ENCODE measurements at regions of chr15 and their contacts with region 1.

Region 1: GRCh38 chr15:43824302-43825246 is at the start of gene MFAP1:
- DNase-seq: peak; percentile 83 to 97
- H3K4me3 ChIP-seq: peak within 1 kb of the TSS; percentile 57 to 83
- H3K27ac ChIP-seq: peak within 1 kb of the TSS; percentile 91 to 92
- H3K4me1 ChIP-seq: peaks cover 9 to 18% of the 10 kb centered on the region in 2 donors
- H3K27me3 ChIP-seq: no peaks in the 10 kb centered on the region
- CTCF ChIP-seq: no peak
- total RNA-seq, gene MFAP1: 14.8 TPM

Region 2: DNA sequence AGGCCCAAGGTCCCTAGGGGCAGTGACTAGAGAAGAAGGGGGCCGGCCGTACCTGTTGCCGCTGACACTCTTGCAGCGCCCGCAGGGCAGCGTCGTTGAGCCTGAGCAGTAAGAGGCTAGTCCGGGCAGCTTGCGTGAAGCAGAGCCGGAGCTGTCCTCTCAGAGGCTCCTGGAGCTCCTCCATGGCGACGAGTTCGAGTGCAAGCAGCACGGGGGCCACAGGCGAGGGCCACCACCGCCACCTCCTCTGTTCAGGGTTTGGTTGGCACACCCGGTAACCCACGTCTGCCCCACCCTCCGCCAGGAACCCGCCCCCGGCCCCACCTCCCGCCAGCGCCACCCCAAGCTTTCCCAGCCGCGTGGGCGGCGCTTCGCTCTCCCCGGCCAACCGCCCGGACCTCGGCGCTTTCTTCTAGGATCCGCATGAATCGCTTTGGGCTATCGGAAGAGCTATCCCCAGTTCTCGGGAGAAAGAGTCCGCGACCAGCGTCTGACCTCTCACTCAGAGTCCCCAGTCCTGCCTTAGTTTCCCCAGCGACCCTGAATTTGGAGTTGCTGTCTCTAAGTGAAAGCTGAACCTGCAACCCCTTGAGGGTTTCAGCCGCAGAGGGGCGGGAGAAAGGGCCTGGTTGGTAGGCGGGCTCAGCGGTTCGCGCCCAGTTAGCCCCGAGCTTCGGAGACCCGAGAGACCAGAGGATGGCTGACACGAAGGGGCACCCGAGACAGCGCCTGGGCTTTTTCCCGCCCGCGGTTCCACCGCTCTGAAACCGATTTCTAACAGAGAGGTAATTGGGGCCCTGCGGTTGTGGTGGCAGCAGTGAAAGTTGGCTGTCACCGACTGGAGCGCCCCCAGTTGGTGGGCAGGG is 47.6 kb before region 1 on chr15 and contains the start of gene ELL3:
- intact Hi-C with region 1: loop called (anchors 10 kb)
- DNase-seq: peak; percentile 53 to 91
- H3K4me3 ChIP-seq: peak within 1 kb of the TSS; percentile 57 to 73
- H3K27ac ChIP-seq: peak within 1 kb of the TSS; percentile 88 to 92
- H3K4me1 ChIP-seq: peaks cover 0 to 11% of the 10 kb centered on the region in 2 donors
- H3K27me3 ChIP-seq: no peaks in the 10 kb centered on the region
- CTCF ChIP-seq: peak; percentile 79 to 87 (median 84)
- total RNA-seq, gene ELL3: 39.5 TPM

Region 3: DNA sequence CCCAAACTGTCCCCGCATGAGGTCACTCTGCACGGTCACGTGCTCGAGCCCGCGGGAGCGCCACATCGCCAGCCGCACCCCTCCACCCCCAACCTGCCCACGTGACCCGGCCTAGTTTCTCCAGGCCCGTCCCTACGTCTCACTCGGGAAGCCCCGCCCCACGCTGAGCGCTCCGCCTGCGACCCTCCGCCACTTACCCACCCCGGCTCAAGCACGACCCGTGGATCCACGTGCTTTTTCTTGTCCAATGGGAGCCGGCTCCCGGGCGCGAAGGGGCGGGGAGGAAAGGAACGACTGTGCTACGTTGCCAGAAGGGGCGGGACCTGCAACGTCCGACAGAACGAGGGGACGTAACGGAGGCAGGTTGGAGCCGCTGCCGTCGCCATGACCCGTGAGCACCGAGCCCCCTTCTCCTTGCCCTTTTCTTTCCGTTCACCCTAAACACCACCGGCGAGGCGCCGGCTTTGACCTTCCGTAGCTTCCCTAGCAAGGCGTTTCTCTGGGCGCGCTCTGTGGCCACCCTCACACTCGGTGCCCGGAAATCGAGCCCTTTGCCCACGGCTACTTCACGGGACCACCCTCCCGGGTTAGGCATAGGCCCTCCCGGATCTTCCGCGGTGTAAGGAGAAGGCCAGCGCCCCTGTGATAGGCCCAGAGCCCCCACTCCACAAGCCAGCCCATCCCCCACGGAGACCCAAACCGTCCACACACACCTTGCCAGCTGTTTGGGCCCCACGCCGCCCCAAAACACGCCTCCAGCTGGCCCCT is 32.4 kb before region 1 on chr15 and contains the start of gene SERF2:
- intact Hi-C with region 1: loop called (anchors 1 kb)
- DNase-seq: peak; percentile 100
- H3K4me3 ChIP-seq: peak within 1 kb of the TSS; percentile 74 to 99
- H3K27ac ChIP-seq: peak within 1 kb of the TSS; percentile 88 to 99
- H3K4me1 ChIP-seq: peaks cover 19 to 26% of the 10 kb centered on the region in 2 donors
- H3K27me3 ChIP-seq: no peaks in the 10 kb centered on the region
- CTCF ChIP-seq: no peak
- total RNA-seq, gene SERF2: 733 TPM

Region 4: DNA sequence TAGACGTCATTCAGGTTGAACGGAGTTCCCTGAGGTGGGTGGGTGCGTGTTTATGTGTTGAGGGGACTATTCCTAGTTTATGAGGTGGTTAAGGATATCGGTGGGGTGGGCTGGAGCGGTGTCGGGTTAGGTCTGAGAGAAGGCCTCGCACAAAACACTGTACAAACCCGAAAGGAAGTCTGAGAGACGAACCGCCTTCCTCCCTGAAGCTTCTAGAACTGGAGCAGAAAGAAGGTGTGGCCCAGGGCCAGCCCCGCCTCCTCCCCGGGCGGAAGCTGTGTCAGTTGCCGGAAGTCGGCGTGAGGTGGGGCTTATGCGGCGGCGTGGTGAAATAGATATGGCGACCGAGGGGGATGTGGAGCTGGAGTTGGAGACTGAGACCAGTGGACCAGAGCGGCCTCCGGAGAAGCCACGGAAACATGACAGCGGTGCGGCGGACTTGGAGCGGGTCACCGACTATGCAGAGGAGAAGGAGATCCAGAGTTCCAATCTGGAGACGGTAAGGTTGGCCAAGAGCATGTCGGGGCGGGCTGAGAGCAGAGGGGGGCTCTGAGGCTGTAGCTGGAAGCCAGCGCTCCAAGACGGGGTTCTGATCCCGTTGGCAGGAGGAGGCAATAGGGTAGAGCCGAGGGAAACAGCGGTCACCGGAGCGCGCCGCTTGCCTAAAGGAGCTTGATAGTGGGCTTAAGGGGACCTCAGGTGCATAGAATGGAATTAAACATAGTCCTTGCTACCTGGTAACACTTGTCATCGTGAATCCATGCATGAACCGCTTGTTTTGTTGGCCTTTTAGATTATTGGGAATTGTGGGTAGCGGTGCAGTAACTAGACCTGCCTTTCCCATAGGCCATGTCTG is 24.1 kb before region 1 on chr15 and contains the start of gene HYPK:
- intact Hi-C with region 1: loop called (anchors 2 kb)
- DNase-seq: peak; percentile 75 to 97
- H3K4me3 ChIP-seq: peak within 1 kb of the TSS; percentile 85 to 96
- H3K27ac ChIP-seq: peak within 1 kb of the TSS; percentile 91 to 96
- H3K4me1 ChIP-seq: peaks cover 8 to 22% of the 10 kb centered on the region in 2 donors
- H3K27me3 ChIP-seq: no peaks in the 10 kb centered on the region
- CTCF ChIP-seq: no peak
- total RNA-seq, gene HYPK: 20.2 TPM

Region 5: DNA sequence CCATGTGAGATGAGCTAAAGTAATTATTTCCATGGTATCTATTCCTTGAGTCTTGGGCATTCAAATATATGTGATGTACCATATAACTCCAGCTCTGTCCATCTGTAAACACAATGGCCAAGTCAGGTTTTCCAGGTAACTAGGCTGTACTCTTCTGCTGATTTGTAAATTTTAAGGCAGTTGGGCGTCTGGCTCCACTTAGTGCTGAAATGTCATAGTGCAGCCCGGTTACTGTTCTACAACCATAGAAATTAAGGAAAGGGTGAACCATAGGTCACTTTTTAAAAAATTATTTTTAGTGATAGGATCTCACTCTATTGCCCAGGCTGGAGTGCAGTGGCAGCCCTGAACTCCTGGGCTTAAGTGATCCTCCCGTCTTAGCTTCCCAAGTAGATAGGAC is 419.3 kb after region 1 on chr15:
- intact Hi-C with region 1: no loop called
- DNase-seq: no peak
- H3K4me3 ChIP-seq: no peak overlapping the region
- H3K27ac ChIP-seq: no peak overlapping the region
- H3K4me1 ChIP-seq: no peaks in the 10 kb centered on the region
- H3K27me3 ChIP-seq: no peaks in the 10 kb centered on the region
- CTCF ChIP-seq: no peak

Measured in ascending aorta (tissue), 2 donors.